ENCODE measurements at regions of chr15 and their contacts with region 1.

Region 1: DNA sequence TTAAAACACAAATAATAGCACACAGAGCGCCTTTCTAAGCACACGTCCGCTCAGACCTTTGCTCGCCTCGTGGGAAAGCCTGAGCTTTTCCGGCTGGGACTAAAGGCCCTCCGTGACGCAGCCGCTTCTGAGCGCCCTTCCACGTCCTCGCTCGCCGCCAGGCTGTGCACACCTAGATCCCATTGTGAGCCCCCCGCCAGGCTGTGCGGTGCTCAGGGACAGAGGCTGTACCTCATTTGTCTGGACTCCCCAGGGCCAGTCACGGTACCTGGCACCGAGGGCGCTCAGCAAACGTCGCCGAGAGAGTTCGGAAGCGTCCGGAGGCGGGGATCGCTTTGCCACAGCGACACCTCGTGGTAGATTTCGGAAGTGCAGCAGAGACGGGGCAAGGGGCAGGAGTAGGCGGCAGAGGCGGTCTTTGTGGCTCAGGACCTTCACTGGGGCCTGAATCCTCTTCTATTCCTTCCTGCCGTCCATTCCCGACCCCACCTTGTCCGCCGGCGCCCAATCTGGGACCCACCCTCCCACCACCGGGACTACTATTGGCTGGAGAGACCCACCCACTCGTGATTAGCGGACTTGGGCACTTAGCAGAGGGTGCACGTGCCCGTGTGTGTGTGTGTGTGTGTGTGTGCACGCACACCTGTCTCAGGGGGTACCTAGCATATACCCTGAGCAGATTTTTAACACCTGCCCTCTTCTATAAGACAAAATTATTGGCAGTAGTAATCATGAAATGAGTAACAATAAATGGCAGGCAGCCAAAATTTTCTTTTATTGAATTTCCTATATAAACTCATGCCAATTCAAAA is 65.6 kb downstream of the RHCG start:
- DNase-seq: peak; percentile 60
- H3K4me3 ChIP-seq: peak overlapping the region in 2 of 3 experiments; percentile 37 to 39
- H3K27ac ChIP-seq: no peak overlapping the region
- H3K4me1 ChIP-seq: peaks cover 7% of the 10 kb centered on the region
- H3K27me3 ChIP-seq: no peaks in the 10 kb centered on the region
- CTCF ChIP-seq: peak; percentile 88 to 93

Region 2: DNA sequence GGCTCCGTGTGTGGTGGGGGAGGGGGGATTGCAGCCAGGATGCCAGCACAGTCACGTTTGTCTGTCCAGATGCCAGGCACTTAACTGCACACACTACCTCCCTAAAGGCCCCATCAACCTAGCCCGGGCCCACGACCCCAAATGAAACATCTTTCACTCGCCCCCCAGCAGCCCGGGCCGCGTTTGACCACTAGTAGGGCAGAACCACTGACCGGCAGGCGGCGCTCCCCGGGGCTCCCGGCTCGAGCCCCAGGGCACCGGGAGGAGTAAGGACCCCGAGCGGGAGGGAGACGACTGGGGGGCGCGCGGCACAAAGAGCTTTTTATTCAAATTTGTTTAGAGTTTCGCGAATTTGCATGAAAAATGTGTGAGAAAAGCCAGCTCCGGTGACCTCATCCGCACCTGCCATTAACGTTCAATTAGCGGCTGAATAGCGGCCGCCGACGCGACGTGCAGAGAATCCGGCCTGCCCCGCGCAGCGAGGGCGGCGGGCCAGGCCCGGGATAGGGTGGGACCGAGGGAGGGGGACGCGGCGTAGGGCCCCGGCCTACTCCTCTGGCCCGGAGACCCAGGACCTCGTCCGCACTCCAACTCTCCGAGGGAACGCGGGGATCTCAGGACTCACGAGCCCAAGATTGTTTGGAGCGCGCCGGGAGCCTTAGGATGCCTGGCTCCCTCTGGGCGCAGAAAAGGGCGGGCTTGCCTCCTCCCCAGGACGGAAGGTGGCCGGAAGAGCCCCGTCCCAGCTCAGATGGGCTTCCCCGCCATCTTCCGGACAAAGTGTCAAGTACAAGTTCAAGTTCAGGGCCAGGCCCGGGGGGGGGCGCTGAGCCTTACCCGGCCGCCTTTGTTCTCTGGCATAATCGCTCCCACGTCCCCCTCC is 31.3 kb before region 1 on chr15:
- CTCF ChIA-PET with region 1: interaction called, 3 read pairs
- dilution Hi-C with region 1: no loop called
- in situ Hi-C with region 1: no loop called
- intact Hi-C with region 1: loop called (anchors 2 kb)
- DNase-seq: no peak
- H3K4me3 ChIP-seq: peak overlapping the region in 2 of 3 experiments; percentile 21 to 31
- H3K27ac ChIP-seq: no peak overlapping the region
- H3K4me1 ChIP-seq: peaks cover 21% of the 10 kb centered on the region
- H3K27me3 ChIP-seq: peaks cover 22% of the 10 kb centered on the region
- CTCF ChIP-seq: peak; percentile 19 to 57

Region 3: DNA sequence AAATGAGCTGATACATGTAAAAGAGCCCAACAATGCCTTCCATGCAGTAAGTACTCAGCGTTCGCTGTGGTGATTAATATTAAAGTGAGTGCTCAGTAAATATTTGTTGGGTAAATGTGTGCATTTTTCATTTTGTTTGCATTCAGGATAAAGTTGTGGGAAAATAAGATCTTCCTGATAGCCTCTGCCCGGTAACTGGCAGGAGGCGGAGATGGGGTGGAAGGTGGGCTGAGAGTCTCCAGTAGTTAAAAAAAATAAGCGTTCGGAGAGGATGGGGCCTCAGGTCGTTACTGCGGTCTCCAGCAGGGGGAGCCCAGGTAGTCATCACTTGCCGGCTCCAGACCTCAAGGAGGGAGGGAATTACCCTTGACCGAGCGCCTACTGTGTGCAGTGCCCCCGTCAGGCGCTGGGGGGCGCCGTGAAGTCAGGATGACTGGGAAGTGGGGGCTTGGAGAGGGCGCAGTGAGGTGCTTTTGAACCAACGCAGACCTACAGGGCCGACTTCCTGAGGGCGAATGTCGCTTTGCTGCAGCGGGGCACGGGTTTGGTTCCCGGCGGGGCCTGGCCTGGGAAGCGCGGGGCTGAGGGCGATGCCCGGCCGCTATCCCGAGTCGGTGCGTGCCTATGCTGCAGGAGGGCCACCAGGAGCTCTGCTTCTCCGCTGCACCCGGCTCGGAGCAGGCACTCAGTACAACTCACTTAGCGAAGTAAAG is 14.4 kb before region 1 on chr15:
- CTCF ChIA-PET with region 1: no interaction called
- dilution Hi-C with region 1: no loop called
- in situ Hi-C with region 1: no loop called
- intact Hi-C with region 1: loop called (anchors 1 kb)
- DNase-seq: peak; percentile 56
- H3K4me3 ChIP-seq: no peak overlapping the region
- H3K27ac ChIP-seq: no peak overlapping the region
- H3K4me1 ChIP-seq: peaks cover 16% of the 10 kb centered on the region
- H3K27me3 ChIP-seq: peaks cover 8% of the 10 kb centered on the region
- CTCF ChIP-seq: peak; percentile 90 to 96

Region 4: GRCh38 chr15:89472785-89473256 is 42.1 kb after region 1 on chr15:
- CTCF ChIA-PET with region 1: no interaction called
- dilution Hi-C with region 1: loop called (anchors 5 kb)
- in situ Hi-C with region 1: no loop called
- intact Hi-C with region 1: loop called (anchors 5 kb)
- DNase-seq: peak; percentile 37
- H3K4me3 ChIP-seq: no peak overlapping the region
- H3K27ac ChIP-seq: no peak overlapping the region
- H3K4me1 ChIP-seq: peaks cover 8% of the 10 kb centered on the region
- H3K27me3 ChIP-seq: peaks cover 4% of the 10 kb centered on the region
- CTCF ChIP-seq: peak; percentile 80 to 92

Region 5: GRCh38 chr15:89483079-89483478 is 52.3 kb after region 1 on chr15:
- CTCF ChIA-PET with region 1: no interaction called
- dilution Hi-C with region 1: no loop called
- in situ Hi-C with region 1: no loop called
- intact Hi-C with region 1: no loop called
- DNase-seq: no peak
- H3K4me3 ChIP-seq: no peak overlapping the region
- H3K27ac ChIP-seq: no peak overlapping the region
- H3K4me1 ChIP-seq: no peaks in the 10 kb centered on the region
- H3K27me3 ChIP-seq: peaks cover 2% of the 10 kb centered on the region
- CTCF ChIP-seq: no peak